ENCODE measurements at regions of chr11 and their contacts with region 1.

Region 1: GRCh38 chr11:83156150-83156995 is 558 bp upstream of the PCF11 start:
- DNase-seq: peak; percentile 98 to 99
- ATAC-seq: peak; percentile 94 to 98 (median 96)
- H3K4me3 ChIP-seq: peak overlapping the region; percentile 36 to 99 (median 84)
- H3K27ac ChIP-seq: peak overlapping the region; percentile 66 to 100 (median 94)
- H3K4me1 ChIP-seq: peaks cover 0 to 29% (median 27%) of the 10 kb centered on the region in 9 donors
- H3K27me3 ChIP-seq: no peaks in the 10 kb centered on the region
- CTCF ChIP-seq: no peak

Region 2: DNA sequence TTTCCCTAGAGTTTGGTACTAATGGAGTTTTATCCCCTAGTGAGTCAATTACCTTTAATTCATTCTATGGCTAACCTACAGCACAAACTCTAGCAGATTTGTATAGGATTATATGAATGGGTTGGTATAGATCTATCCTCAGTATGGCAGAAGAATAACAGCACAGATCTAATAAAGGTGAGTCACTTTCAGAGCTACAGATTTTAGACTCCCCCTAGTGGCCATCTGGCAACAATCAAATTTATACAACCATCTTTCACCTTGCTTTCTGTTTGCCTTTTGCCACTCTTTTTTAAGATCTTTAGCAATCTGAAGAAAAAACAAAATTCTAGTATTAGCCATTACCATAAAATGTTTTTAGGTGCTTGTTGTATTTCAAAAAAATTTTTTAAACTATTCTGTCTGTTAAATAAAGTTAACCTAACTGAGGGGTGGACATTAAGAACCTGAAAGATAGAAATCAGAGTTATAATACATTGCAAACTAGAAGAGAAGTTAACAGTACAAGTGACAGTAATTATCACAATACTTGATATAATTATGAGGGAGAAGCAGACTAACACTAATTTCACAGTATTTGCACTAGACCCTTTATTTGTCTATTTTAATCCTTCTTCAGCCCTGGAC is 229.0 kb before region 1 on chr11:
- intact Hi-C with region 1: loop called in 2 of 10 experiments (anchors 5 kb)
- DNase-seq: peak in 1 of 2 donors; percentile 20
- ATAC-seq: peak in 2 of 8 donors; percentile 51 to 63
- H3K4me3 ChIP-seq: no peak overlapping the region
- H3K27ac ChIP-seq: no peak overlapping the region
- H3K4me1 ChIP-seq: peaks cover 0 to 12% (median 0%) of the 10 kb centered on the region in 9 donors
- H3K27me3 ChIP-seq: no peaks in the 10 kb centered on the region
- CTCF ChIP-seq: peak in 8 of 9 donors; percentile 68 to 89 (median 80)

Region 3: GRCh38 chr11:82996966-82997606 is 159.3 kb before region 1 on chr11:
- intact Hi-C with region 1: loop called in 2 of 10 experiments (anchors 5 to 10 kb)
- DNase-seq: no peak
- ATAC-seq: no peak
- H3K4me3 ChIP-seq: no peak overlapping the region
- H3K27ac ChIP-seq: peak overlapping the region in 6 of 10 donors; percentile 0 to 78 (median 56)
- H3K4me1 ChIP-seq: peaks cover 0 to 90% (median 58%) of the 10 kb centered on the region in 9 donors
- H3K27me3 ChIP-seq: no peaks in the 10 kb centered on the region
- CTCF ChIP-seq: no peak

Region 4: GRCh38 chr11:83007909-83008580 is 148.3 kb before region 1 on chr11:
- intact Hi-C with region 1: loop called in 2 of 10 experiments (anchors 5 to 10 kb)
- DNase-seq: peak; percentile 70 to 73
- ATAC-seq: peak; percentile 81 to 94 (median 91)
- H3K4me3 ChIP-seq: no peak overlapping the region
- H3K27ac ChIP-seq: peak overlapping the region in 9 of 10 donors; percentile 19 to 84 (median 61)
- H3K4me1 ChIP-seq: peaks cover 20 to 70% (median 50%) of the 10 kb centered on the region in 9 donors
- H3K27me3 ChIP-seq: no peaks in the 10 kb centered on the region
- CTCF ChIP-seq: peak in 3 of 9 donors; percentile 7 to 17 (median 14)

Region 5: DNA sequence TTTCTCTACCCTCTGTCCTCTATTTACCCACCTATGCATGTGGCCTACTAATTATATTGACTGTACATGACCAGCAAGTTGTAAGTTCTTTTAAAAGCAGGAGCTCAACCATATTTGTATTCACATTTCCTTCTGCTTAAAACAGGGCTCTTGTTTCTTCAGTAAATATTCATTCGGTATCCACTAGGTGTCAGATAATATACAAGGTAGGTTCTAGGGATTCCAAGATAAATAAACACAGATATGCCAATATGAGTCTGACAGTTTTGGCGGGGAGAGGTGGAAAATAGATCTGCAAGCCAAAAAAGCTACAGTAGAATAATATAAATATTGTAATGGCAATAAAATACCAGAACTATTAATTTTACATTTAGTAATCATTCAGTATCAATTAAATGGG is 69.3 kb before region 1 on chr11:
- intact Hi-C with region 1: loop called in 1 of 10 experiments (anchors 5 kb)
- DNase-seq: no peak
- ATAC-seq: peak in 2 of 8 donors; percentile 32 to 55
- H3K4me3 ChIP-seq: no peak overlapping the region
- H3K27ac ChIP-seq: no peak overlapping the region
- H3K4me1 ChIP-seq: peaks cover 0 to 13% (median 0%) of the 10 kb centered on the region in 9 donors
- H3K27me3 ChIP-seq: no peaks in the 10 kb centered on the region
- CTCF ChIP-seq: peak in 5 of 9 donors; percentile 6 to 25 (median 19)

Region 6: GRCh38 chr11:83193315-83194280 is 37.2 kb after region 1 on chr11 and contains the start of gene ANKRD42:
- intact Hi-C with region 1: loop called in 4 of 10 experiments (anchors 2 to 5 kb)
- DNase-seq: peak; percentile 88 to 96
- ATAC-seq: peak; percentile 97 to 99 (median 98)
- H3K4me3 ChIP-seq: peak within 1 kb of the TSS; percentile 63 to 90 (median 80)
- H3K27ac ChIP-seq: peak within 1 kb of the TSS; percentile 37 to 96 (median 90)
- H3K4me1 ChIP-seq: peaks cover 7 to 39% (median 30%) of the 10 kb centered on the region in 9 donors
- H3K27me3 ChIP-seq: no peaks in the 10 kb centered on the region
- CTCF ChIP-seq: no peak
- total RNA-seq, gene ANKRD42: 3.7 to 10.7 (median 6.4) TPM

Region 7: GRCh38 chr11:83336993-83337392 is 180.6 kb after region 1 on chr11:
- intact Hi-C with region 1: no loop called
- DNase-seq: no peak
- ATAC-seq: no peak
- H3K4me3 ChIP-seq: no peak overlapping the region
- H3K27ac ChIP-seq: no peak overlapping the region
- H3K4me1 ChIP-seq: no peaks in the 10 kb centered on the region
- H3K27me3 ChIP-seq: no peaks in the 10 kb centered on the region
- CTCF ChIP-seq: no peak